Breast epithelium (tissue), 4 donors: ENCODE measurements at regions of chr5 and their contacts with region 1.

Region 1: GRCh38 chr5:1152156-1152555 is 40.3 kb upstream of the SLC12A7 start:
- DNase-seq: no peak
- H3K4me3 ChIP-seq: no peak overlapping the region
- H3K27ac ChIP-seq: no peak overlapping the region
- H3K4me1 ChIP-seq: peaks cover 0 to 7% of the 10 kb centered on the region in 2 donors
- H3K27me3 ChIP-seq: peaks cover 7 to 25% of the 10 kb centered on the region in 2 donors
- CTCF ChIP-seq: no peak
- POLR2A ChIP-seq: no peak

Region 2: DNA sequence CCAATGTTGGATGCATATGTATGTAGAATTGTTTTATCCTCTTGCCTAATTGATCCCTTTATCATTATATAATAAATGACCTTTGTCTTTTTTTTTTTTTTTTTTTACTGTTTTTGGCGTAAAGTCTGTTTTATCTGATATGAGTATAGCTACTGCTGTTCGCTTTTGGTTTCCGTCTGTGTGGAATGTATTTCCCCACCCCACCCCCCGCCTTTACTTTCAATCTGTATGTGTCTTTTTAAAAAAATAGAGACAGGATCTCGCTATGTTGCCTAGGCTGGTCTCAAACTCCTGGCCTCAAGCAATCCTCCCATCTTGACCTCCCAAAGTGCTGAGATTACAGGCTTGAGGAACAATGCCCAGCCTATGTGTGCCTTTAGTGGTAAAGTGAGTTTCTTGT is 819.3 kb before region 1 on chr5:
- intact Hi-C with region 1: no loop called
- DNase-seq: no peak
- H3K4me3 ChIP-seq: no peak overlapping the region
- H3K27ac ChIP-seq: no peak overlapping the region
- H3K4me1 ChIP-seq: no peaks in the 10 kb centered on the region
- H3K27me3 ChIP-seq: no peaks in the 10 kb centered on the region
- CTCF ChIP-seq: no peak
- POLR2A ChIP-seq: no peak

Region 3: DNA sequence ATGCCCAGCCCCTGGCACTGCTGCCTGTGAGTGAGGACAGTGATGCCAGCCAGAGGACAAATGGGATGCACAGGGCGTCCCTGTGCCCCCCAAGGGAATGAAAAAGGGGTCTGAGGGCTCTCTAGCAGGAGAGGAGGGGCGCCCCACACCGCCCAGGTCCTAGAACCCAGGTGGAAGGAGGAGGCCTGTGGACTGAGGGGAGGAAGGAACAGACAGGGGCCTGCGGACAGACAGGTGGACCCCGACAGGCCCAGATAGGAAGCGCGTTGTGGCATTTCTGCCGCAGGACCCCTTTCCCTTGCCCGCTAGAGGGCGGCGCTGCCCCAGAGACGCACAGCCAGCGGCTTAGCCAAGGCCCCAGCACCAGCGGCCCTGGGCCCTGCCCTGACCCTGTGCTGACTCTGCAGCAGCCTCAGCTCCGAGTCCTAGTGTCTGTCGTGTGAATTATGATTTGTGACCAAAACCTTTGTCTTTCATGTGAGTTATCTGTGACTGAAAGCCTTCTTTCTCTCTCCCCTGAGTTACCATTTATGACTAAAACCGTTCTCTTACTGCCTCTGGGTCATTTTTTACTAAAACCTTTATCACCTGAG is 228.8 kb before region 1 on chr5:
- intact Hi-C with region 1: loop called (anchors 10 kb)
- DNase-seq: peak; percentile 53 to 78
- H3K4me3 ChIP-seq: no peak overlapping the region
- H3K27ac ChIP-seq: no peak overlapping the region
- H3K4me1 ChIP-seq: peaks cover 0 to 4% of the 10 kb centered on the region in 2 donors
- H3K27me3 ChIP-seq: peaks cover 0 to 10% of the 10 kb centered on the region in 2 donors
- CTCF ChIP-seq: peak; percentile 57 to 85 (median 82)
- POLR2A ChIP-seq: no peak

Region 4: GRCh38 chr5:1058988-1059883 is 92.9 kb before region 1 on chr5:
- intact Hi-C with region 1: loop called (anchors 1 kb)
- DNase-seq: no peak
- H3K4me3 ChIP-seq: no peak overlapping the region
- H3K27ac ChIP-seq: no peak overlapping the region
- H3K4me1 ChIP-seq: no peaks in the 10 kb centered on the region
- H3K27me3 ChIP-seq: no peaks in the 10 kb centered on the region
- CTCF ChIP-seq: no peak
- POLR2A ChIP-seq: no peak

Region 5: GRCh38 chr5:1467768-1468534 is 315.8 kb after region 1 on chr5:
- intact Hi-C with region 1: no loop called
- DNase-seq: peak in 1 of 2 donors; percentile 46
- H3K4me3 ChIP-seq: no peak overlapping the region
- H3K27ac ChIP-seq: no peak overlapping the region
- H3K4me1 ChIP-seq: no peaks in the 10 kb centered on the region
- H3K27me3 ChIP-seq: no peaks in the 10 kb centered on the region
- CTCF ChIP-seq: peak in 1 of 3 donors; percentile 15
- POLR2A ChIP-seq: no peak